ENCODE measurements at regions of chr4 and their contacts with region 1.

Region 1: DNA sequence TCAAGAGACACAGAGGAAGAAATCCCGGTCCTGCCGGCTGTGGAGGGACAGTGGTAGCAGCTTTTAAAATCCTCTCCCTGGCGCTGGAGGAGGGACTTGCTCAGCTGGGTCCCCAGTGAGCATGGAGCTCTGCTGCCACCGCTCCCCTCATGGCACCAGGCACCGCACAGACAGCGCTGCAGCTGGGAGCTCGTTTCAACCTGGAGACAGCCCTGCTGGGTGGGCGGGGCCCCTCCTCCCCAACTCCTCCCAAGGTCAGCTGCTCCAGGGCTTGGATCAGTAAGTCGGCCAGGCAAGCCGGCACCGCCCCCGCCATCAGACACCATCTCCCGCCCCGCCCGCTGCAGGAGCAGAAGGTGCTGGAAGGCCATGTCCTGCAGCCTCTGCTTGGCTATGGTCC is 16.4 kb downstream of the ZFYVE28 start:
- DNase-seq: peak; percentile 87
- H3K4me3 ChIP-seq: peak overlapping the region; percentile 19 to 44
- H3K27ac ChIP-seq: peak overlapping the region in 1 of 2 experiments; percentile 40; a peak in 1 of 4 replicates
- H3K4me1 ChIP-seq: peaks cover 0 to 18% of the 10 kb centered on the region in 2 experiments; a peak in 2 of 4 replicates
- H3K27me3 ChIP-seq: no peaks in the 10 kb centered on the region
- CTCF ChIP-seq: no peak
- EP300 ChIP-seq: no peak
- RAD21 ChIP-seq: peak; percentile 42

Region 2: DNA sequence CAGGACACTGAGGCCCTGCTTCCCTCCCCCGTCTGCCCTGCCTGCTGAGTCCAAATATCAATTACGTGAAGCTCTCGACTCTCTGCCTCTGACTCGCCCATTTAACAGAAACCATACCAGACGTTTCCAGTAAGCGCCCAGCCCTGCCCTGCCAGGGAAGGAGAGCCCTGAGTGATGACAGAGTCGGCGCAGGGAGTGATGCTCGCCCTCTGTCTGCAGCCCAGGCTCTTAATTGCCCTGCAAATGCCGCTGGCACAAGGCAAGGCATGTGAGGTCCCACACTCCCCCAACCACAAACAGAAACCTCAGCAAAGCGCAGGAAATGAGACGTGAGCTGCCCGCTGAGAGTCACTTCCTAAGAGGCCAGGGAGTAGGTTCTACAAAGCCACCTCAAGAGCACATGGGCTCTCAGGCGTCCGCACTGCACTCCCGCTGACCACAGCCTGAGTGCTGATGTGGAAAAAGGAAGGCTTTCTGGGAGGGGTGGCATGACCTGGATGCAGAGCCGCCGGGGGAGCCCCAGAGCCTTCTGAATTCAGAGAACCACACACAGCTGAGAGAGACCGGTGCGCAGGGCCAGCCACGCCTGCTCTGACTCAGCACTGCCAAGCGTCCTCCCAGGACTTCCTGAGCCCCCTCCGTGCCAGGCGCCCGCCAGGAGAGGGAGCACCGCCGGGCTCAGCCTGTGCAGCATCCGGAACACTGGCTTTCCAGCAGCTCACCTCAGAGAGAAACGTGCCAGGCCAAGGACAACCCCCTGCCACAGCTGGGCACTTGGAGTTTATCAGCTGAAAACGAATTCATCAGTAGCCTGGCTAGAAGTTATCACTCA is 11.1 kb after region 1 on chr4:
- CTCF ChIA-PET with region 1: interaction called, 15 read pairs
- POLR2A ChIA-PET with region 1: interaction called, 9 read pairs
- DNase-seq: peak; percentile 89
- H3K4me3 ChIP-seq: peak overlapping the region; percentile 43 to 57
- H3K27ac ChIP-seq: peak overlapping the region; percentile 82 to 97
- H3K4me1 ChIP-seq: peaks cover 11 to 40% of the 10 kb centered on the region in 2 experiments; a peak in 2 of 4 replicates
- H3K27me3 ChIP-seq: 0 out of 2 replicates have a peak, but pooled peaks cover 16% of the 10 kb centered on the region
- CTCF ChIP-seq: peak; percentile 62
- EP300 ChIP-seq: 0 out of 4 replicates have a peak, but pooled peaks have one; percentile 28 to 40
- RAD21 ChIP-seq: peak; percentile 55

Measured in SK-N-SH (cell line).